Psoas muscle (tissue), 8 donors: ENCODE measurements at regions of chr5 and their contacts with region 1.

Region 1: GRCh38 chr5:36228505-36228904 is 13.2 kb downstream of the NADK2 start:
- DNase-seq: no peak
- ATAC-seq: peak in 1 of 4 donors; percentile 26
- H3K4me3 ChIP-seq: no peak overlapping the region
- H3K27ac ChIP-seq: no peak overlapping the region
- H3K4me1 ChIP-seq: peaks cover 11% of the 10 kb centered on the region
- H3K27me3 ChIP-seq: no peaks in the 10 kb centered on the region
- CTCF ChIP-seq: no peak

Region 2: DNA sequence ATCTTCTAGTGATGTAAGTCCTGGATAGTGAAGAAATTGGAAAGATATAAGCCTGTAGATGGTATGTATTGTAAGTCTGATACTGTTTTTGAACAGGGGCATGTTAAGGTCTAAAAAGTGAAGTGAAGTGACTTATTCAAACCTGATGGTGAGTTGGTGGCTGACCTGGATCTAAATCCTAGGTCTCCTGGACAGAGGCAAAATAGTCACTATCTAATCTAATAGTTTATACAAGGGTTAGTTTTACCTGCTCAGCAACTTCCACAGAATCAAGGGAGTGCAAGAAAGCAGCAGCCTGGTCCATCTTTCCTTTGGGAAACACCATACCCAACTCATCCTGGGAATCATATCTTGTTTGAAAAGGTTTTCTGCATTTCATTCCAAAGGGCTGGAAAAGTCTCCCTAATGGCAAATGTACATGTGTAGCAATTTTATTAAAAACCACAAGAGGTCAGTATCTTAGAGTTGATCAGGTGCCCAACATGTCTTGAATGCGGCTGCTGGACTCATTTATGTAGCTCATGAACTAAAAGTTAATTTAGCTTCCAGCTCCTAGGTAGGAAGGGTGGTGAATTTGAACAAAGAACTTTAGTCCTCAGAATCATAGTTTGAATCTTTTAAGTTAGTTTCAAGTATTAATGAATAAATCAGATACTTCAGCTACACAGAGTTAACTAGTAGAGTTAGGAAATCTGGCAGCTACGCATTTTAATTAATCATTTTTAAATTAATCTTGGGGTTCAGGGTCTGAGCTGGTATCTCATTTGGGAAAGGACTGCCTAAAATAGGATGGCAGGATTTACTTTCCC is 50.6 kb before region 1 on chr5:
- intact Hi-C with region 1: loop called in 1 of 2 experiments (anchors 10 kb)
- DNase-seq: no peak
- ATAC-seq: peak in 2 of 4 donors; percentile 50 to 79
- H3K4me3 ChIP-seq: no peak overlapping the region
- H3K27ac ChIP-seq: no peak overlapping the region
- H3K4me1 ChIP-seq: no peaks in the 10 kb centered on the region
- H3K27me3 ChIP-seq: no peaks in the 10 kb centered on the region
- CTCF ChIP-seq: peak; percentile 53

Region 3: GRCh38 chr5:36264202-36264760 is 35.8 kb after region 1 on chr5:
- intact Hi-C with region 1: no loop called
- DNase-seq: no peak
- ATAC-seq: no peak
- H3K4me3 ChIP-seq: no peak overlapping the region
- H3K27ac ChIP-seq: no peak overlapping the region
- H3K4me1 ChIP-seq: no peaks in the 10 kb centered on the region
- H3K27me3 ChIP-seq: no peaks in the 10 kb centered on the region
- CTCF ChIP-seq: no peak